ENCODE measurements at regions of chr4 and their contacts with region 1.

Region 1: DNA sequence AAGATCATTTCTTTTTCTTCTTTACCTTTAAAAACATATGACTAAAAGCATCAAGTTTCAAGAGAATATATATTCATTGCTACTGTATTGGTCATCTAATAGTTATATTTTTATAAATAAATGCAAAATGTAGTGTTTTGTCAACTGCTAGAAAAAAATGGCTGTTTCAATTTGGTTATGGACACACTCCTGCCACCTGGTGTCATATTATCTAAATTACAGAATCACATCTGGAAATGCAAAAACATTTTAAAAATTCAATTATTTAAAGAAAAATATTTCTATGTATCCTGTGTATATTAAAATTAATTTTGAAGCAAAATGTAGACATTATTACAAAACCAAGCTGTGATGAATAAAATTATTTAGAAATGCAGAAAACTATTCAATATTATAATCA is 329.4 kb upstream of the PCDH18 start:
- DNase-seq: no peak
- ATAC-seq: no peak
- H3K4me3 ChIP-seq: no peak overlapping the region
- H3K27ac ChIP-seq: no peak overlapping the region
- H3K4me1 ChIP-seq: no peaks in the 10 kb centered on the region
- H3K27me3 ChIP-seq: no peaks in the 10 kb centered on the region
- CTCF ChIP-seq: no peak
- EP300 ChIP-seq: no peak
- POLR2A ChIP-seq: no peak
- RAD21 ChIP-seq: no peak

Region 2: GRCh38 chr4:137124278-137124932 is 737.3 kb before region 1 on chr4:
- CTCF ChIA-PET with region 1: interaction called, 3 read pairs
- POLR2A ChIA-PET with region 1: no interaction called
- in situ Hi-C with region 1: no loop called
- intact Hi-C with region 1: loop called (anchors 2 kb)
- DNase-seq: peak; percentile 17
- ATAC-seq: peak; percentile 97
- H3K4me3 ChIP-seq: no peak overlapping the region
- H3K27ac ChIP-seq: no peak overlapping the region
- H3K4me1 ChIP-seq: no peaks in the 10 kb centered on the region
- H3K27me3 ChIP-seq: no peaks in the 10 kb centered on the region
- CTCF ChIP-seq: peak; percentile 64
- EP300 ChIP-seq: no peak
- POLR2A ChIP-seq: no peak
- RAD21 ChIP-seq: no peak

Region 3: DNA sequence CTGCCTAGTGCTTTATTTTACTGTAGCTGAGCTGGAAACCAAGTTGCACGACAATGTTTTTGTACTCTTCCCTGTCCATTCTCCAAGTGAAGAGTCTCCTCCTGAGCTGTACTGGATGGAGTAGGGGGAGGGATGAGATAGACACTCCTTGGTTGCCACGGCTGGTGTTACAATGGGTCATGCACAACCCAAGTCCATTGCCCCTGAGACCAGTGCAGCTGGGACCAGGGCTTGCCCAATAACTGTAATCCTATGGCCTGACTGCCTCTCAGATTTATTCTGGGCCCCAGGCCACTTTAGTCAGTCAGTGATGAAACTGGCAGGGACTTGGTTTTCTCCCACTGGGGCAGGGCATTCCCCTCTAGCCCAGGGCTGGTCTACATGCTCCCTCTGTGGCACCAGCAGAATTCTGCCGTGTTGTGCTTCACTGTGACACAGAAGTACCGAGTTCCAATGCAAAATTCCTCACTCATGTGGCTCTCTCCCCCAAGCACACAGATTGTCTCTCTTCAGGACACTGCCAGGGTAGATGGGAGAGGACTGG is 126.0 kb before region 1 on chr4:
- CTCF ChIA-PET with region 1: interaction called, 7 read pairs
- POLR2A ChIA-PET with region 1: no interaction called
- in situ Hi-C with region 1: no loop called
- intact Hi-C with region 1: loop called (anchors 1 kb)
- DNase-seq: no peak
- ATAC-seq: peak; percentile 27; the same call in 1 of the 3 replicates
- H3K4me3 ChIP-seq: no peak overlapping the region
- H3K27ac ChIP-seq: no peak overlapping the region
- H3K4me1 ChIP-seq: no peaks in the 10 kb centered on the region
- H3K27me3 ChIP-seq: no peaks in the 10 kb centered on the region
- CTCF ChIP-seq: no peak
- EP300 ChIP-seq: no peak
- POLR2A ChIP-seq: no peak
- RAD21 ChIP-seq: no peak

Region 4: DNA sequence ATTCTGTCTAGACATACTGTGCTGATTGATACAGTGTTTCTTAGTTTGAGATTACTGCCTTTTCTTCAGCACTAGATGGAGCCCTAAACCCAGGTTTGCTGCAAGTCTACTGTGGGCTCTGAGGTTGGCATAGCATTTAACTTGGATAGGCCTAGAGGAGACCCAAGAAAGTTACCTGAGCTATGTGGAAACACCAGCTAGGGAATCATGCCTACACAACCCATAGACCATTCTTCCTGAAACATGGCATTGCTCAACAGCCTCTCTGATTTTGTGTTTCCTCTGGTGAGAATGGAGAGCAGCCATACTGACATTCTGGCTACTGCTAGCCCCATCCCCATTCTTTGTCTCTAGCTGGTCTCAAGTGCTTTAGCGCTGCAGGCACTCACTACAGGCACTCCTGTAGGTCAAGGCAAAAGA is 41.7 kb before region 1 on chr4:
- CTCF ChIA-PET with region 1: interaction called, 12 read pairs
- POLR2A ChIA-PET with region 1: no interaction called
- in situ Hi-C with region 1: no loop called
- intact Hi-C with region 1: loop called (anchors 1 kb)
- DNase-seq: peak; percentile 45
- ATAC-seq: peak; percentile 97
- H3K4me3 ChIP-seq: no peak overlapping the region
- H3K27ac ChIP-seq: no peak overlapping the region
- H3K4me1 ChIP-seq: no peaks in the 10 kb centered on the region
- H3K27me3 ChIP-seq: no peaks in the 10 kb centered on the region
- CTCF ChIP-seq: peak; percentile 78
- EP300 ChIP-seq: no peak
- POLR2A ChIP-seq: no peak
- RAD21 ChIP-seq: peak; percentile 71

Measured in HepG2 (cell line).